Activated CD4-positive, alpha-beta T cell treated with anti-CD3 and anti-CD28 coated beads, Interleukin-2, amount 10 ng/mL, durations not matched to agents 7 days and 5 days (primary cell): ENCODE measurements at regions of chr13 and their contacts with region 1.

Region 1: DNA sequence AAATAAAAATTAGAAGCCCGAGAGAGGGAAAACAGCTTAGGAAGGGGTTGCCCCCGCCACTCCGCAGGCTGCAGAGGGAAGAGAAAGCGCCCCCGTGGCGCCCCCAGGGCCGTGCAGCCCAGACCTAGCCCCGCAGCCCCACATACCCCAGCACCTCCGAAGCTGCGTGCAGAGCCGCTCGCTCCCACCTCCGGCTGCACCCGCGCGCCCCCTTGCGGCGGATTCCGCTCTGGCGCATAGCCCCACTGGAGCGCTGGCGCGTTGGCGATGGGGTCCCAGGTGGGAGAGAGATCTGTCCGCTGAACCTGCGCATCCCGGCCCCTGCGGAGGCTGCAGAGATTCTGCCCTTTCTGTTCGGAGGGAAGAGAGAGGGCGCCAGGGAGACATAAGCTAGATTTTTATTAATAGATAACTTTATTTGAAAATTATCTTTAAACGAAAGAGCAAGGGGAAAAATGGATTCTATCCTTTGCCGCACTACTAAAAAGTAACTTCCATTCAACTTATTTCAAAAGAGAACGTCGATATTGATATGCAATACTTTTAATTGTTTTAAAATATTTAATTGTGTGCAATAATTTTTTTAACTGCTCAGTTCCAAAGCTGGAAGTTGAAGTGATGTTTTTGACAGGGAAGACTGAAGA is 11.7 kb upstream of the CLN5 start:
- DNase-seq: peak; percentile 84
- H3K4me3 Mint-ChIP-seq: peak overlapping the region; percentile 22
- H3K27ac Mint-ChIP-seq: no peak overlapping the region
- H3K4me1 Mint-ChIP-seq: peaks cover 10% of the 10 kb centered on the region
- H3K27me3 Mint-ChIP-seq: peaks cover 32% of the 10 kb centered on the region

Region 2: GRCh38 chr13:76958841-76959432 is 21.3 kb before region 1 on chr13:
- CTCF ChIA-PET with region 1: no interaction called
- POLR2A ChIA-PET with region 1: no interaction called
- DNase-seq: no peak
- H3K4me3 Mint-ChIP-seq: no peak overlapping the region
- H3K27ac Mint-ChIP-seq: no peak overlapping the region
- H3K4me1 Mint-ChIP-seq: no peaks in the 10 kb centered on the region
- H3K27me3 Mint-ChIP-seq: no peaks in the 10 kb centered on the region

Region 3: DNA sequence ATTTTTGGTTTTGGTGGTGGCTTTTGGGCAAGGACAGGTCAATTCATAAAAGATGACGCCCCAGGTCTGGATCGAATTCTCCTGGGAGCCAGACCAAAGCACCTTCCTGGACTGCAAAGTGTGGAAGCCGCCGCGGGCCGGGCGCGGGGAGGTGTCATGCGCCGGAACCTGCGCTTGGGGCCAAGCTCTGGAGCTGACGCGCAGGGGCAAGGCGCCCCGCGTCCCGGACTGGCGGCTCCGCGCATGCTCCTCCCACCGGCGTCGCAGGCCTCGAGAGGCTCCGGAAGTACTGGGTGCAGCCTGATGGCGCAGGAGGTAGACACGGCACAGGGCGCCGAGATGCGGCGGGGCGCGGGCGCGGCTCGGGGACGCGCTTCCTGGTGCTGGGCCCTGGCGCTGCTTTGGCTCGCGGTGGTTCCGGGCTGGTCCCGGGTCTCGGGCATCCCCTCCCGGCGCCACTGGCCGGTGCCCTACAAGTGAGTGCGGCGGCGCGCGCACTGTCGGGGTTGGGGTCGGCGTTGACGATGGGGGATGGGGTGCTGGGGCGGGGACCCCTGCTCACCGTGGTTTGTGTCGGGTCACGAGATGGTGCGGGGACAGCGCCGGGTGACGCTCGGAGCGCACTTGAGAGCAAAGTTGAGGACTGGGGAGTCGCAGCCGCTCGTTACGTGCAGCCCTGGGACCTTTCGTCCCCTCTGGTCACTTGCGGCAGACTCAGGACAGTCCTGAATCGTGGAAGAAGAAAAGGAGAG is 11.8 kb after region 1 on chr13 and contains the start of gene CLN5:
- CTCF ChIA-PET with region 1: interaction called, 31 read pairs
- POLR2A ChIA-PET with region 1: no interaction called
- DNase-seq: peak; percentile 95
- H3K4me3 Mint-ChIP-seq: peak within 1 kb of the TSS; percentile 95
- H3K27ac Mint-ChIP-seq: peak within 1 kb of the TSS; percentile 100
- H3K4me1 Mint-ChIP-seq: peaks cover 35% of the 10 kb centered on the region
- H3K27me3 Mint-ChIP-seq: peaks cover 4% of the 10 kb centered on the region
- total RNA-seq, gene CLN5: 15.5 to 15.8 TPM